ENCODE measurements at regions of chr1 and their contacts with region 1.

Region 1: GRCh38 chr1:86913896-86914634 is at the start of gene SELENOF:
- DNase-seq: peak; percentile 100
- H3K4me3 ChIP-seq: peak within 1 kb of the TSS; percentile 99
- H3K27me3 ChIP-seq: no peaks in the 10 kb centered on the region
- CTCF ChIP-seq: no peak
- polyA plus RNA-seq, gene SELENOF: 115 and 283 TPM in 2 replicates

Region 2: GRCh38 chr1:86774305-86775295 is 139.5 kb before region 1 on chr1:
- CTCF ChIA-PET with region 1: no interaction called
- POLR2A ChIA-PET with region 1: no interaction called
- DNase-seq: peak; percentile 50
- H3K4me3 ChIP-seq: no peak overlapping the region
- H3K27me3 ChIP-seq: no peaks in the 10 kb centered on the region
- CTCF ChIP-seq: no peak

Region 3: GRCh38 chr1:86846166-86846647 is 67.9 kb before region 1 on chr1:
- CTCF ChIA-PET with region 1: interaction called, 3 read pairs
- POLR2A ChIA-PET with region 1: interaction called, 13 read pairs
- DNase-seq: peak; percentile 70
- H3K4me3 ChIP-seq: no peak overlapping the region
- H3K27me3 ChIP-seq: no peaks in the 10 kb centered on the region
- CTCF ChIP-seq: no peak

Measured in BJ (cell line).